Activated CD4-positive, alpha-beta T cell treated with anti-CD3 and anti-CD28 coated beads for 36 hours (primary cell): ENCODE measurements at regions of chr1 and their contacts with region 1.

Region 1: DNA sequence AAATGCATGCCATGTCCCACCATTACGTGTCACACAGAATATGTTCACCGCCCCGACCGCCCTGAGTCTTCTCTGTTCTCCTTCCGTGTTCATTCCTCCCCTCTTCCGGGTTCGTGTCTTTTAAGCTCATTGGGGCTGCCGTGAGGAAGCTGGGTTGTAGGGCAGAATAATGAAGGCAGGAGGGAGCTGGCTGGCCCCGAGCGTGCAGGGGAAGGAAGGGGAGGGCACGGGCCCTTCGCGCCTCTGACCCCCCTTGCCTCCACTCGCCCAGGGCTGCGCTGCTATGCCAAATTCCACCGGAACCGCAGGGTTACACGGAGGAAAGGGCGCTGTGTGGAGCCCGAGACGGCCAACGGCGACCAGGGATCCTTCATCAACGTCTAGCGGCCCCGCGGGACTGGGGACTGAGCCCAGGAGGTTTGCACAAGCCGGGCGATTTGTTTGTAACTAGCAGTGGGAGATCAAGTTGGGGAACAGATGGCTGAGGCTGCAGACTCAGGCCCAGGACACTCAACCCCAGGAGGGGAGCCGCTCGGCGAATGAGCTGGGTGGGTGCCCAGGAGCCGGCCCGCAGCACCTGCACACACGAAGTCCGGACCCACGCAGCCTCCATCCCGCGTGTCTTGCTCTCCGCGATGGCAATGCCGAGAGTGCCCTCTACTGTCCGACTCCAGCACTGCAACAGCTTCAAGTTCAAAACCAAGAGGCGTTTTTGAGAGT is 16.5 kb upstream of the AGTRAP start:
- DNase-seq: peak; percentile 91
- ATAC-seq: peak; percentile 85
- H3K4me3 Mint-ChIP-seq: peak overlapping the region; percentile 70
- H3K27ac Mint-ChIP-seq: peak overlapping the region; percentile 71
- H3K4me1 Mint-ChIP-seq: peaks cover 13% of the 10 kb centered on the region
- H3K27me3 Mint-ChIP-seq: no peaks in the 10 kb centered on the region

Region 2: GRCh38 chr1:11337580-11338073 is 381.8 kb before region 1 on chr1:
- CTCF ChIA-PET with region 1: interaction called, 3 read pairs
- POLR2A ChIA-PET with region 1: no interaction called
- intact Hi-C with region 1: loop called in 1 of 2 experiments (anchors 5 kb)
- DNase-seq: peak; percentile 86
- ATAC-seq: peak; percentile 96
- H3K4me3 Mint-ChIP-seq: no peak overlapping the region
- H3K27ac Mint-ChIP-seq: no peak overlapping the region
- H3K4me1 Mint-ChIP-seq: no peaks in the 10 kb centered on the region
- H3K27me3 Mint-ChIP-seq: peaks cover 14% of the 10 kb centered on the region

Region 3: DNA sequence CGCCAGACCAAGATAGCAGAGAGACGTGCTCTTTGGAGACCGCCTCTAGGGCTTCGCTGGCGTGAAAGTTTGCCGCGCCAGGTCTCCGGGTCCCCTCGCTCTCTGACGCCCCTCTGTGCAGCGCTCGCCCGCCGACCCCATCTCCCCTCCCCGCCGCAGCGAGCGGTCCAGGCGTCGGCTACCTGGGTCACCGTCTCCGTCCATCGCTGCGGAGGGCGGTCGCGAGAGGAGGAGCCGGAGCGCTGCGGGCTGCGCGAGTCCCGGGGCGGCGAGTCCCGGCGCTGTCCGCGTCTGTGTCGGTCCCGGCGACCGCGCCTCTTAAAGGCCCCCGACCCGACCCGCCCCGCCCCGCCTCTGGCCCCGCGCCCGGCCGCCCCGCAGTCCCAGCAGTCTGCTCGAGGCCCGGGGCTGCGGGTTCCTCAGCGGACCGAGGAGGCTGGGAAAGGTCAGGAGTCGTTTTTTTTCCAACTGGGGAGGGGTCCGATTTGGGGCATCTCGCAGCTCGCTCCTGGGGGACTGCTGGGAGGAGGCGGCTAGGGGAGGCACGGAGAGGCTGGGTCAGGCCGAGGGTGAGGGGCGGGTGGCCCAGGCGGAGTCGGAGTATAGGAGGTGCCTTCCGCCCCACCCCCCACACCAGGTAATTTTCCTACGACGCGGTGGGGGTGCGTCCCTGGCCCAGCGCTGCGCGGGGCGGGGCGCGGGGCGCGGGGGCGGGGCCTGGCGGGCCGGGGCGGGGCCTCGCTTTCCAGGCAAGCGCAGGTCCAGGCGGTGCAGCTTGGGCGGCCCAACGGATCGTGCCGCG is 65.1 kb before region 1 on chr1 and contains the starts of genes FBXO2 and FBXO44:
- CTCF ChIA-PET with region 1: interaction called, 34 read pairs
- POLR2A ChIA-PET with region 1: no interaction called
- intact Hi-C with region 1: loop called (anchors 1 kb)
- DNase-seq: peak; percentile 85
- ATAC-seq: peak; percentile 82
- H3K4me3 Mint-ChIP-seq: peak within 1 kb of the TSS; percentile 73
- H3K27ac Mint-ChIP-seq: no peak within 1 kb of the TSS
- H3K4me1 Mint-ChIP-seq: peaks cover 25% of the 10 kb centered on the region
- H3K27me3 Mint-ChIP-seq: no peaks in the 10 kb centered on the region
- total RNA-seq, gene FBXO2: 1.6 to 2.1 TPM
- total RNA-seq, gene FBXO44: 20.2 to 21.8 TPM

Region 4: DNA sequence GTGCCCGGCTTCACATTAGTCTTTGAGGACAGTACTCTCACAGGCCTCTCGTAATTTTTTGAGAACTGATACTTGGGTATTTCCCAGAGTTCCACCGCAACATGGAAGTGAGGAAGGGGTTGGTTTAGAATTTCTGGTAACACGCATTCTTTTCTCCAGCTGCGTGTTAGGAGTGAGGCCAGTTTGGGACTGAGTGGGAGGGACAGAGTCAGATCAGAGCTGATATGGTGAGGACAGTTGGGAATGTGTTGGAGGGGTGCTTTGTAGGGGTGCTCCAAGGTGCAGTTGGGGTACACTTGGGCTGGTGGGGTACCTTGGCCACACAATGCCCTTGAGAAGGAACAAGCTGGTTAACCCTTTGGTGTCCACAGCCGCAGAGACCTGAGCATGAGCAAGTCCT is 48.7 kb before region 1 on chr1:
- CTCF ChIA-PET with region 1: interaction called, 19 read pairs
- POLR2A ChIA-PET with region 1: no interaction called
- intact Hi-C with region 1: no loop called
- DNase-seq: no peak
- ATAC-seq: no peak
- H3K4me3 Mint-ChIP-seq: no peak overlapping the region
- H3K27ac Mint-ChIP-seq: no peak overlapping the region
- H3K4me1 Mint-ChIP-seq: no peaks in the 10 kb centered on the region
- H3K27me3 Mint-ChIP-seq: no peaks in the 10 kb centered on the region

Region 5: GRCh38 chr1:11735854-11736745 is 16.6 kb after region 1 on chr1 and contains the start of gene AGTRAP:
- CTCF ChIA-PET with region 1: interaction called, 22 read pairs
- POLR2A ChIA-PET with region 1: interaction called, 3 read pairs
- intact Hi-C with region 1: no loop called
- DNase-seq: peak; percentile 95
- ATAC-seq: peak; percentile 81
- H3K4me3 Mint-ChIP-seq: peak within 1 kb of the TSS; percentile 87
- H3K27ac Mint-ChIP-seq: peak within 1 kb of the TSS; percentile 82
- H3K4me1 Mint-ChIP-seq: peaks cover 56% of the 10 kb centered on the region
- H3K27me3 Mint-ChIP-seq: no peaks in the 10 kb centered on the region
- total RNA-seq, gene AGTRAP: 13.2 to 13.3 TPM

Region 6: DNA sequence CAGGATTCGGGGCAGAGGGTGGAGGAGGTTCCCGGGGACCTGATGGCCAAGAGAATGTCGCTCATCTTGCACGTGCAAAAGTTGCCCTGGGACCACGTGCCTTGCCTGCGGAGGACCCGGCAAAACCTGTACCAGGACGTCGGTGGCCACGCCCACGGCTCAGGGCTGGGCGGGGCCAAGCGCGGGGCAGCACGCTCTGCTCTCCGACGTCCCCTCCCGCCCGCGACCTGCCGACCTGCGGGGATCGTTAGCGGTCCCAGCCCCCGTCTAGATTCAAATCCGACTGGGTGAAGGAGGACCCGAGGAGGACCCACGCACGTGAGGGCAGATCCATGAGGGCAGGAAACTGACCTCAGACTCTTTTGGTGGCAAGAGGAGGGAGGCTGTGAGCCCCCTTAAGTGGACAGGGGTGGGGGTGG is 42.5 kb after region 1 on chr1 and contains the start of gene C1orf167:
- CTCF ChIA-PET with region 1: no interaction called
- POLR2A ChIA-PET with region 1: no interaction called
- intact Hi-C with region 1: no loop called
- DNase-seq: peak; percentile 58
- ATAC-seq: peak; percentile 84
- H3K4me3 Mint-ChIP-seq: no peak within 1 kb of the TSS
- H3K27ac Mint-ChIP-seq: no peak within 1 kb of the TSS
- H3K4me1 Mint-ChIP-seq: no peaks in the 10 kb centered on the region
- H3K27me3 Mint-ChIP-seq: peaks cover 15% of the 10 kb centered on the region
- total RNA-seq, gene C1orf167: not detected